Activated CD8-positive, alpha-beta T cell treated with anti-CD3 and anti-CD28 coated beads for 36 hours (primary cell): ENCODE measurements at regions of chr2 and their contacts with region 1.

Region 1: GRCh38 chr2:68925295-68925896 is 27.3 kb downstream of the GKN2 start:
- DNase-seq: peak; percentile 67
- ATAC-seq: peak; percentile 87
- H3K4me3 Mint-ChIP-seq: no peak overlapping the region
- H3K27ac Mint-ChIP-seq: no peak overlapping the region
- H3K4me1 Mint-ChIP-seq: peaks cover 1% of the 10 kb centered on the region
- H3K27me3 Mint-ChIP-seq: peaks cover 2% of the 10 kb centered on the region
- CTCF ChIP-seq: peak; percentile 97

Region 2: DNA sequence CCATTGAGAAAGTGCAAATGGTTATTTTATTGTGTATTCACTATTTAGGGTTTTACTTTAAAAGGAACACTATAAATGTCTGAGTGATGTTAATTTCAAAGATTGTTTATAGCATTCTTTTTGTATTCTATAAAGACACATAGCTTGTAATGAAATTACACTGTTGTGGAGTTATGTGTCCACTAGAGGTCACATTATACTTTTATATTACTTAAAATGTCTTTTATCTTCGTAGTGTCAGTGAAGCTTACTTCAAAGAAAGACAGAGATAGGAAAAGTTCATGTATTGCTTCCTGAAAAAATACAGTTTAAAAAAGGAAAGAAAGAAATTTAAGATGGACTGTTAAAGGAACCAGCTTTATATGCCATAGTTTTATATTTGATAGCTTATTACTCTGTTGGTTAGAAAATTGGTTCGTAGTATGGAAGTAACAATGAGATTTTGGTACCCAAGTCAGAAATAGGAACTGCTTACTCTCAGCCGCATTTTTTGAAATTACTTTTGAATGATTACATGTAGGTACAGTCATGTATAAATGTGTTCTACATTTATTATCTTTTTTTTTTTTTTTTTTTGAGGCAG is 437.5 kb before region 1 on chr2:
- CTCF ChIA-PET with region 1: interaction called, 29 read pairs
- POLR2A ChIA-PET with region 1: no interaction called
- intact Hi-C with region 1: no loop called
- DNase-seq: no peak
- ATAC-seq: peak; percentile 60
- H3K4me3 Mint-ChIP-seq: no peak overlapping the region
- H3K27ac Mint-ChIP-seq: no peak overlapping the region
- H3K4me1 Mint-ChIP-seq: peaks cover 5% of the 10 kb centered on the region
- H3K27me3 Mint-ChIP-seq: no peaks in the 10 kb centered on the region
- CTCF ChIP-seq: peak; percentile 72

Region 3: GRCh38 chr2:68721482-68722101 is 203.8 kb before region 1 on chr2:
- CTCF ChIA-PET with region 1: interaction called, 10 read pairs
- POLR2A ChIA-PET with region 1: no interaction called
- intact Hi-C with region 1: no loop called
- DNase-seq: peak; percentile 53
- ATAC-seq: peak; percentile 33
- H3K4me3 Mint-ChIP-seq: peak overlapping the region; percentile 50
- H3K27ac Mint-ChIP-seq: peak overlapping the region; percentile 87
- H3K4me1 Mint-ChIP-seq: peaks cover 77% of the 10 kb centered on the region
- H3K27me3 Mint-ChIP-seq: no peaks in the 10 kb centered on the region
- CTCF ChIP-seq: no peak

Region 4: DNA sequence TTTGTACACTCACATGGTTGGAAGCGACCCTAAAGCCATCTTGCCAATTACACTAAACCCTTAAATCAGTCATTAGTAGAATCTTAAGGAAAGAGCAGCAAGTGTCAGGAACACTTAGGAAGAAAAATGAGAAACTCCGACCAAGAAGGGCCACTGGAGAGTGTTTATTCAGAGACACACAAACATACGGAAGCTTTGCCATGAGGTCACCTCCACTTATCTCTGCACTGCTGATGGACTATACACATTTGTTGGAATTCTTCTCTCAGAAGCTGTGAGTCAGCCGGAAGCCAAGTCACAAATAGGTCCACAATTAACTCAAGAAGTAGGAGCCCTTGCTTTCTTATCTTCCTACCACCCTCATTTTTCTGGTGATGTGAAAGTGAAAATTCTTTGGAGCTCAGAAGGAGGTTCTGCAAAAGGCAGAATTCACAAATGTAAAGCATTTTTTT is 75.8 kb before region 1 on chr2:
- CTCF ChIA-PET with region 1: interaction called, 33 read pairs
- POLR2A ChIA-PET with region 1: no interaction called
- intact Hi-C with region 1: no loop called
- DNase-seq: no peak
- ATAC-seq: no peak
- H3K4me3 Mint-ChIP-seq: no peak overlapping the region
- H3K27ac Mint-ChIP-seq: no peak overlapping the region
- H3K4me1 Mint-ChIP-seq: no peaks in the 10 kb centered on the region
- H3K27me3 Mint-ChIP-seq: peaks cover 11% of the 10 kb centered on the region
- CTCF ChIP-seq: no peak

Region 5: GRCh38 chr2:68936427-68936826 is 11.0 kb after region 1 on chr2:
- CTCF ChIA-PET with region 1: interaction called, 36 read pairs
- POLR2A ChIA-PET with region 1: no interaction called
- intact Hi-C with region 1: no loop called
- DNase-seq: no peak
- ATAC-seq: no peak
- H3K4me3 Mint-ChIP-seq: no peak overlapping the region
- H3K27ac Mint-ChIP-seq: no peak overlapping the region
- H3K4me1 Mint-ChIP-seq: no peaks in the 10 kb centered on the region
- H3K27me3 Mint-ChIP-seq: peaks cover 7% of the 10 kb centered on the region
- CTCF ChIP-seq: no peak

Region 6: DNA sequence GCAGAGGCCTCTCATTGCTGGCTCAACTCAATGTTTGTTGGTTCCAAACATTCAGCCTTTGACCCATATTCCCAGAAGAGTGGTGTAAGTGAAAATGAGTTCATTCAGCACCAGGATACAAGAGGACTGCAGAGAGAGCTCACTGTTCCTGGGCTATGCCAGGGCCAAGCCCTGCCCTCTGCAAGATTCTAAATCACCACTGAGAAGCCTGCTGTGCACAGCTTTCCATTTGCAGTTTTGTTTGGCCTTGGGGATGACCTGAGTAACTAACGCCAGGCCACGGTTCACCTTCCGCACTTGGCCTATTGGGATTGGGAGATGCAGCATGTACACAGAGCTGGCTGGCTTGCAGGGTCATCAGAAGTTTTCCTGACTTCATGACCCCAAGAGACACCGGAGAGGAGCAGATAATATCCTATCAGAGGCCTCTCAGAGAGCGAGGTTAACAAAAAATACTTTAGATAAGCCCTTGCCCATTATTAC is 61.7 kb after region 1 on chr2:
- CTCF ChIA-PET with region 1: no interaction called
- POLR2A ChIA-PET with region 1: no interaction called
- intact Hi-C with region 1: no loop called
- DNase-seq: no peak
- ATAC-seq: no peak
- H3K4me3 Mint-ChIP-seq: no peak overlapping the region
- H3K27ac Mint-ChIP-seq: no peak overlapping the region
- H3K4me1 Mint-ChIP-seq: no peaks in the 10 kb centered on the region
- H3K27me3 Mint-ChIP-seq: peaks cover 6% of the 10 kb centered on the region
- CTCF ChIP-seq: no peak

Region 7: GRCh38 chr2:69012310-69013141 is 87.1 kb after region 1 on chr2:
- CTCF ChIA-PET with region 1: no interaction called
- POLR2A ChIA-PET with region 1: no interaction called
- intact Hi-C with region 1: no loop called
- DNase-seq: peak; percentile 51
- ATAC-seq: peak; percentile 41
- H3K4me3 Mint-ChIP-seq: peak overlapping the region; percentile 68
- H3K27ac Mint-ChIP-seq: no peak overlapping the region
- H3K4me1 Mint-ChIP-seq: peaks cover 12% of the 10 kb centered on the region
- H3K27me3 Mint-ChIP-seq: peaks cover 45% of the 10 kb centered on the region
- CTCF ChIP-seq: peak; percentile 75

Region 8: GRCh38 chr2:69054431-69054830 is 129.0 kb after region 1 on chr2:
- CTCF ChIA-PET with region 1: no interaction called
- POLR2A ChIA-PET with region 1: no interaction called
- intact Hi-C with region 1: no loop called
- DNase-seq: peak; percentile 33
- ATAC-seq: peak; percentile 97
- H3K4me3 Mint-ChIP-seq: no peak overlapping the region
- H3K27ac Mint-ChIP-seq: peak overlapping the region; percentile 68
- H3K4me1 Mint-ChIP-seq: peaks cover 16% of the 10 kb centered on the region
- H3K27me3 Mint-ChIP-seq: peaks cover 35% of the 10 kb centered on the region
- CTCF ChIP-seq: no peak